Ascending aorta (tissue), 2 donors: ENCODE measurements at regions of chr18 and their contacts with region 1.

Region 1: GRCh38 chr18:79378542-79379250 is 17.0 kb upstream of the NFATC1 start:
- DNase-seq: peak in 1 of 2 donors; percentile 89
- H3K4me3 ChIP-seq: no peak overlapping the region
- H3K27ac ChIP-seq: no peak overlapping the region
- H3K4me1 ChIP-seq: peaks cover 0 to 2% of the 10 kb centered on the region in 2 donors
- H3K27me3 ChIP-seq: no peaks in the 10 kb centered on the region
- CTCF ChIP-seq: peak; percentile 93 to 98 (median 95)

Region 2: DNA sequence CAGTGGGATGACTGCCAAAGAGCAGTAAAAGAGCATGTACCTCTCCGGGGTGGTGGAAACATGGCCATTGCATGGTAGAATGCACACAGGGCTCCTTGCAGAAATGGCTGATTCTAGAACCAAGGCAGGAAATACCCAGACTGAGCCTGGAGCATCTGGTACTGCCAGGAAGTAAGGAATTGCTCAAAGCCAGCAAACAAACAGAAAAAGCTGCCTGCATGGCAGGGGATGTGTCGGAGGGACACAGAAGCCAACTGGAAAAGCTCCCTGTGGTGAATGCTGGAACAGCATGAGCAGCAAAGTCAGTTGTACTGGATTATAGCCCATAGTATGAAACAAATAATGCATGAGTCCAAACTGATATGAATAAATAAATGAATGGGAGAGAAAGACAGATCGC is 61.0 kb before region 1 on chr18:
- intact Hi-C with region 1: no loop called
- DNase-seq: no peak
- H3K4me3 ChIP-seq: no peak overlapping the region
- H3K27ac ChIP-seq: no peak overlapping the region
- H3K4me1 ChIP-seq: no peaks in the 10 kb centered on the region
- H3K27me3 ChIP-seq: no peaks in the 10 kb centered on the region
- CTCF ChIP-seq: no peak

Region 3: DNA sequence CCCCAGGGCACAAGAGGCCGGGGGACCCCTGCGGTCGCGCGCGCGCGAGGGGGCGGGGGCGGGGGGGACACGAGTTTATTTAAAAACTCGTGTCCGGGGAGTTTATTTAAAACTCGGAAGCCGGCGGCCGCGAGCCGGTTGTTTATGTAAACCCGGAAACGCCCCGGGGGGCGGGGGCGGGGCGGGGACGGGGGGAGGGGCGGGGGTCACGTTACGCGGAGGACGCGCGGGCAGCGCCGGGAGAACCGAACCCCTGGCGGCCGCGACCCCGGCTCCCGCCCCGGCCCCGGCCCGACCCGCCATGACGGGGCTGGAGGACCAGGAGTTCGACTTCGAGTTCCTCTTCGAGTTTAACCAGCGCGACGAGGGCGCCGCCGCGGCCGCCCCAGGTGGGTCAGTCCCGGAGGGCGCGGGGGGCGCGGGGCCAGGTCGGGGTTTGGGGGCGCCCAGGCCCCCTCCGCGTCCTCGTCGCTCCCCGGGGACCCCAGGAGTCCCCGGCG is 21.4 kb after region 1 on chr18:
- intact Hi-C with region 1: loop called (anchors 2 kb)
- DNase-seq: peak in 1 of 2 donors; percentile 84
- H3K4me3 ChIP-seq: peak overlapping the region; percentile 91 to 96
- H3K27ac ChIP-seq: peak overlapping the region; percentile 89 to 90
- H3K4me1 ChIP-seq: peaks cover 4 to 18% of the 10 kb centered on the region in 2 donors
- H3K27me3 ChIP-seq: no peaks in the 10 kb centered on the region
- CTCF ChIP-seq: no peak

Region 4: GRCh38 chr18:79458131-79458838 is 79.6 kb after region 1 on chr18:
- intact Hi-C with region 1: loop called (anchors 2 kb)
- DNase-seq: peak; percentile 16 to 87
- H3K4me3 ChIP-seq: peak overlapping the region in 1 of 2 donors; percentile 45
- H3K27ac ChIP-seq: peak overlapping the region; percentile 39 to 61
- H3K4me1 ChIP-seq: peaks cover 0 to 14% of the 10 kb centered on the region in 2 donors
- H3K27me3 ChIP-seq: no peaks in the 10 kb centered on the region
- CTCF ChIP-seq: no peak

Region 5: GRCh38 chr18:79528846-79529245 is 150.2 kb after region 1 on chr18:
- intact Hi-C with region 1: loop called (anchors 1 kb)
- DNase-seq: peak in 1 of 2 donors; percentile 82
- H3K4me3 ChIP-seq: no peak overlapping the region
- H3K27ac ChIP-seq: no peak overlapping the region
- H3K4me1 ChIP-seq: peaks cover 5 to 13% of the 10 kb centered on the region in 2 donors
- H3K27me3 ChIP-seq: no peaks in the 10 kb centered on the region
- CTCF ChIP-seq: peak; percentile 76 to 92 (median 80)

Region 6: GRCh38 chr18:79644006-79644665 is 265.4 kb after region 1 on chr18:
- intact Hi-C with region 1: loop called (anchors 1 kb)
- DNase-seq: no peak
- H3K4me3 ChIP-seq: no peak overlapping the region
- H3K27ac ChIP-seq: no peak overlapping the region
- H3K4me1 ChIP-seq: peaks cover 0 to 2% of the 10 kb centered on the region in 2 donors
- H3K27me3 ChIP-seq: no peaks in the 10 kb centered on the region
- CTCF ChIP-seq: peak; percentile 90 to 100 (median 98)